SK-N-SH (cell line): ENCODE measurements at regions of chrX and their contacts with region 1.

Region 1: GRCh38 chrX:68828740-68829552 is at the start of gene EFNB1:
- DNase-seq: peak; percentile 87
- H3K4me3 ChIP-seq: peak within 1 kb of the TSS; percentile 61 to 62
- H3K27ac ChIP-seq: peak within 1 kb of the TSS in 1 of 2 experiments; percentile 58; a peak in 1 of 4 replicates
- H3K4me1 ChIP-seq: peaks cover 0 to 9% of the 10 kb centered on the region in 2 experiments; a peak in 1 of 4 replicates
- H3K27me3 ChIP-seq: peaks cover 15% of the 10 kb centered on the region; the same call in 1 of the 2 replicates
- CTCF ChIP-seq: no peak
- EP300 ChIP-seq: no peak
- RAD21 ChIP-seq: peak; percentile 3; the same call in 1 of the 2 replicates
- polyA plus RNA-seq, gene EFNB1: 7.5 and 8.4 TPM in 2 replicates

Region 2: GRCh38 chrX:68842781-68843581 is 14.0 kb after region 1 on chrX:
- CTCF ChIA-PET with region 1: interaction called, 31 read pairs
- POLR2A ChIA-PET with region 1: interaction called, 5 read pairs
- DNase-seq: no peak
- H3K4me3 ChIP-seq: no peak overlapping the region
- H3K27ac ChIP-seq: no peak overlapping the region
- H3K4me1 ChIP-seq: peaks cover 0 to 7% of the 10 kb centered on the region in 2 experiments; a peak in 1 of 4 replicates
- H3K27me3 ChIP-seq: no peaks in the 10 kb centered on the region; the same call in 1 of the 2 replicates
- CTCF ChIP-seq: no peak
- EP300 ChIP-seq: no peak
- RAD21 ChIP-seq: no peak

Region 3: DNA sequence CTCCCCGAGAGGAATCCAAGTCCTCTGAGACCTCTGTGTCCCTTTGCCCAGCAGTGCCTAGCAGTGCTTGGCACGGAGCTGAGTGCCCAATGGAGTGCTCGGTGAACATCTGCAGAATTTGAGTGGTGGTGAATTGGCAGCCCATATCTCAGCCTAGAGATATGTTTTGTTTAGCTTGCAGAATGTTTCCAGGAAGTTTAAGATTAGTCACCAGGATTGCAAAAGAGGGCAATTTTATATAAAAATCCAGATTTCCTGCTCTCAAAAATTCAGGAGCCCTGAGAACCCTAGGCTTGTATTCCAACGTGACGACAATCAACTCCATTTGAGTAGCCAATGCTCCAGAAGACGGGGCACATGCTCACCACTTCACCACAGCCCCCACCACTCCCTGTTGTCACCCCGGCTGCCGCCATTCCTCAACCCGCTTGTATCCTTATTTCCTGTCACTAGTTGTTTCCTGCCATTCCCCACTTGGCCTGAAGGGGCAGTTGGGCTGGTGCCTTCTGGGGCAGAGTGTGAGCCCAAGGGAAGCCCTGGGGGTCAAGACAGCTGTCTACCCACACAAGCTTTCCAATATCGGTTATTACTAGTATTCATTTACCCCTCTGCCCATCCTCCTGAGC is 116.8 kb after region 1 on chrX:
- CTCF ChIA-PET with region 1: interaction called, 27 read pairs
- POLR2A ChIA-PET with region 1: interaction called, 7 read pairs
- DNase-seq: no peak
- H3K4me3 ChIP-seq: no peak overlapping the region
- H3K27ac ChIP-seq: no peak overlapping the region
- H3K4me1 ChIP-seq: peaks cover 0 to 20% of the 10 kb centered on the region in 2 experiments; a peak in 1 of 4 replicates
- H3K27me3 ChIP-seq: peaks cover 5% of the 10 kb centered on the region
- CTCF ChIP-seq: peak; percentile 48
- EP300 ChIP-seq: no peak
- RAD21 ChIP-seq: no peak

Region 4: GRCh38 chrX:69014200-69014599 is 185.3 kb after region 1 on chrX:
- CTCF ChIA-PET with region 1: no interaction called
- POLR2A ChIA-PET with region 1: no interaction called
- DNase-seq: no peak
- H3K4me3 ChIP-seq: no peak overlapping the region
- H3K27ac ChIP-seq: no peak overlapping the region
- H3K4me1 ChIP-seq: peaks cover 0 to 3% of the 10 kb centered on the region in 2 experiments; a peak in 1 of 4 replicates
- H3K27me3 ChIP-seq: no peaks in the 10 kb centered on the region; the same call in 1 of the 2 replicates
- CTCF ChIP-seq: no peak
- EP300 ChIP-seq: no peak
- RAD21 ChIP-seq: no peak

Region 5: GRCh38 chrX:69070949-69071650 is 242.2 kb after region 1 on chrX:
- CTCF ChIA-PET with region 1: interaction called, 9 read pairs
- POLR2A ChIA-PET with region 1: interaction called, 14 read pairs
- DNase-seq: peak; percentile 63
- H3K4me3 ChIP-seq: no peak overlapping the region
- H3K27ac ChIP-seq: peak overlapping the region in 1 of 2 experiments; percentile 78; a peak in 2 of 4 replicates
- H3K4me1 ChIP-seq: peaks cover 0 to 42% of the 10 kb centered on the region in 2 experiments; a peak in 1 of 4 replicates
- H3K27me3 ChIP-seq: no peaks in the 10 kb centered on the region; the same call in 1 of the 2 replicates
- CTCF ChIP-seq: no peak
- EP300 ChIP-seq: no peak
- RAD21 ChIP-seq: no peak

Region 6: DNA sequence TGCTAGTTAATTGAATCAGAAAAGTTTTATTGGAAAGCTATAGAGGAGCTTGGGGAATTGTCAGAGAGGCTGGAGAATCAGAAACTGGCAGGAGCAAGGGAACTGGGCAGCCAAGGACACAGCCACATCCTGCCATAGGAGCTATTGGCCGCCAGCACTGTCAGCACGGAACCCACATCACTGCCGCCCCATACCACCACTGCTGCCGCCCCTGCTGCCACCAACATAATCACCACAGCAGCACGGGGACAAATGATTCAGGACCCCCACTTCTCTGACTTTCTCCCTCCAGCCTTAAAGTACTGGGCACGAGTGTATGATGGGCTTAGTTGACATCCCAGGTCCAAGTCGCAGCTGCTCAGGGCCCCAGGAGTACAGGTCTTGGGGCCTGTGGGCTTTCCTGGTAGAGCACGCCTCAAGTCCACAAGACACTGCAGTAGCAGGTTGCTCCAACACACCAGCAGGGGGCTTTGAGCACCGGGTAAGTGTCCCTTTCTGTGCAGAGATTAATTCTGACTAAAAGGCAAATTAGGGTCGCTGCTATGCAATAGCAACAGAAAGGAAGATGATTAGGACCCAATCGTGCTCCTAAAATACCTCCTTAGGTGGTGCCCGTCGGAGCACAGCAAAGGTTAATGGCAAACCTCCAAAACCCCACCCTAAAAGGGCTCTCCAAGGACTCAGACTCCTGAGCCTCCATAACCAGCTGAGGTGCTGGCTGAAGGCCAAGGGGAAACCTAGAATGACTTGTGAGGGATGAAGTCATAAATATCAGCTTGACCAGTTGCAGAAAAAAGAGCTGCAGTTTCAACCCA is 329.4 kb after region 1 on chrX:
- CTCF ChIA-PET with region 1: interaction called, 18 read pairs
- POLR2A ChIA-PET with region 1: no interaction called
- DNase-seq: peak; percentile 65
- H3K4me3 ChIP-seq: no peak overlapping the region
- H3K27ac ChIP-seq: no peak overlapping the region
- H3K4me1 ChIP-seq: peaks cover 0 to 2% of the 10 kb centered on the region in 2 experiments; a peak in 1 of 4 replicates
- H3K27me3 ChIP-seq: peaks cover 7% of the 10 kb centered on the region; the same call in 1 of the 2 replicates
- CTCF ChIP-seq: peak; percentile 66
- EP300 ChIP-seq: no peak
- RAD21 ChIP-seq: peak; percentile 57

Region 7: DNA sequence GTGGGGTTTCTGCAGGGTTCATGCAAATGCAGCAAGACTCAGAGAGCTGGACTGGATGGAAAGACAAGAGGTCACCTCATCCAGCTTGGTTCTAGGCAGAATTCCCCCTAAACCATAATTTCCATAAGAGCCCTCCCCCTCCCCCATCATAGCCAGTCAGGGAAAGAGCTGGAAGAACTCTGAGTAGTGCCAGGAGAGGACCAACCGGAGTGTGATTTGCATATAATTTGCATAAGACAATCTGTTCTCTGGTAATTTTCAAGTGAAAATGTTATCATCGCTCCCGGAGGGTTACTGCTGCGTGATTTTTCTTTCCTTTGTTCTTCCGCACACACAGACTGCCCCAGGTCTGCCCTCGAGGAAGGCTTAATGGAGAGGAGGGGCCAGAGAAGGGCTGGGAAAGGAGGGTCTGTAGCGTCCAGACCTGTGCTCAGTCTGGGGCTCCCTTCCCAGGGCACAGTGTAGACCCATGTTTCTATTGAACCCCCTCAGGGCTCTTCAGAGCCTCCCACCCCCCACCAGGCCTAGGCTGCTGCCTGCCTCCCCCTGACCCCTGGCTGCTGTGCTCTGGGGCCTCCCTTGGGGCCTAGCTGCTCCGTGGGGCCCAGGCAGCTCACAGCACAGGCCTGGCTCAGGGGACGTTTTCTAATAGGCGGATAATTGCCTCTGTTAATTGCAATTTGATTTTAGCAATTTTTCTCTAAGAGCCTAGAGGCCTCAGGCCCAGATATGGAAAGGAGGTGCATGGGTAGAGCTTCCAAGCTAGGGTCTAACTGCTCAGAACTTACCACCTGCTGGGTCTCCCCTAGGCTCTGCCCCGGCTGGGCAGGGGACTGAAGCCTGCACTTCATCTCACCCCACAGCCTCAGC is 426.7 kb after region 1 on chrX:
- CTCF ChIA-PET with region 1: interaction called, 10 read pairs
- POLR2A ChIA-PET with region 1: no interaction called
- DNase-seq: no peak
- H3K4me3 ChIP-seq: no peak overlapping the region
- H3K27ac ChIP-seq: no peak overlapping the region
- H3K4me1 ChIP-seq: peaks cover 0 to 5% of the 10 kb centered on the region in 2 experiments; a peak in 1 of 4 replicates
- H3K27me3 ChIP-seq: peaks cover 17% of the 10 kb centered on the region
- CTCF ChIP-seq: no peak
- EP300 ChIP-seq: no peak
- RAD21 ChIP-seq: no peak